Common myeloid progenitor, CD34-positive (primary cell): ENCODE measurements at regions of chr9 and their contacts with region 1.

Region 1: DNA sequence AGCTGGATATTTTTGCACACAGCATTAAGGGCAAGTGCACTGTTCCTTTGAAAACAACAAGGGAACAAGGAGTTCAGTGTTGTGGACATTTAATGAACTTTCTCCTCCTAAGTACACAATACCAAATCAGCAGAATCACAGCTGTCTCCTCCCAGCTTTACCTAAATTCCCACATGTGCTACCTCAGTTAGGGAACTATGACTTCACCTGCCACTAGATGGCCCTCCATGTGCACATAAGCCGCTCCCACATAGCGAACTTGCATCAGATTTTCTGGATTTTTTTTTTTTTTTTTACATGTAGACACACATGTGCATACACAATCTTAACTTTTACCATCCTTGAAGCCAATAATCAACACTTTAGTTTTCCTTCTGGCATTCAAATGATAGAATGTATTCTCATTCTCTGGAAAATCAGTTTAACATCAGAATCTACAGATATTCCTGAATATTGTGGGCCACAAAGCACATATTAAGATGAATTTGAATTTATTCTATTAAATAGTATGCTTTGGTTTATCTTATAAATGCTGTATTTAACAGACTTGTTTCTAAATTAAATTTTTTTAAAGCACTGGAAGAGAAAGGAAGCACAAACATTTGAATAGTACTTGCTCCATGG is 123.6 kb downstream of the PALM2AKAP2 start:
- DNase-seq: peak; percentile 69 to 78 (median 76)
- H3K4me3 ChIP-seq: no peak overlapping the region
- H3K27ac ChIP-seq: no peak overlapping the region
- H3K4me1 ChIP-seq: no peaks in the 10 kb centered on the region
- H3K27me3 ChIP-seq: peaks cover 0 to under 1% (median 0%) of the 10 kb centered on the region in 5 experiments

Region 2: DNA sequence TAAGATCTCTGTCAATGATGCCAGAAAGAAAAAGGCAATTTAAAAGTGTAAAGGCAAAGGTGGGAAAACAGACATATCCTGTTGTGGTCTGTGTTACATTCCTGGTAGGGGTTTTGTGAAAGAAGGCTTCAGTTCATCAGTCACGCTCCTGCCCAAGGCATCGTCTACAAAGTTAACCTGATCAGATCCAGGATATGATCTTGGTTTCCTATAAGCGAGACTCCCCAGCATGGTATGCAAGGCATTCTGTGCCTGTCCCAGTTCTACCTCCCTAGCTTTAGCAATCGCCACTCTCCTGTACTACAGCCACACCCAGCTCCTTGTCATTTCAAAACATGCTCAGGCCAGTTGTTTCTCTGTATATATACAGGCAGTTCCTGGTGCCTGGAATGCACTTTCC is 347.6 kb before region 1 on chr9:
- CTCF ChIA-PET with region 1: no interaction called
- POLR2A ChIA-PET with region 1: no interaction called
- DNase-seq: no peak
- H3K4me3 ChIP-seq: no peak overlapping the region
- H3K27ac ChIP-seq: no peak overlapping the region
- H3K4me1 ChIP-seq: no peaks in the 10 kb centered on the region
- H3K27me3 ChIP-seq: peaks cover 0 to 61% (median 23%) of the 10 kb centered on the region in 5 experiments

Region 3: DNA sequence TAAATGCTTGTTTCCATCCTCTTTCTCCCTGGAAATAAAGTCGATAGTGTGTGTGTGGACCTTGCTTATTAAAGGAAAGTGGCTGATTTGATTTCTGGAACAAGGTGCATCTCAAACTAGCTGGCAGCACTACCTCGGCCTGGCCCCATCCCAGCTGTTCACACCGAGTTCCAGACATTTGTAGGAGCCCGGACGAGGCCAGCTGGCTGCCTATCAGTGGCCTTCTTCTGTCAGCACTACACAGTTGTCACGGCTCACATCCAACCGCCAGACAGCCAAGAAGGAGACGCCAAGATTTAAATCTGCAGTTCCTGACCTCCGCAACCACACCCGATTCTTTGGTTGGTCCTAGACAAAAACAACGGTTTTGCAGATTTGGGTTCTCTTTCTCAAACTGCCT is 60.0 kb before region 1 on chr9:
- CTCF ChIA-PET with region 1: no interaction called
- POLR2A ChIA-PET with region 1: no interaction called
- DNase-seq: no peak
- H3K4me3 ChIP-seq: no peak overlapping the region
- H3K27ac ChIP-seq: no peak overlapping the region
- H3K4me1 ChIP-seq: no peaks in the 10 kb centered on the region
- H3K27me3 ChIP-seq: peaks cover 0 to 3% (median 0%) of the 10 kb centered on the region in 5 experiments

Region 4: DNA sequence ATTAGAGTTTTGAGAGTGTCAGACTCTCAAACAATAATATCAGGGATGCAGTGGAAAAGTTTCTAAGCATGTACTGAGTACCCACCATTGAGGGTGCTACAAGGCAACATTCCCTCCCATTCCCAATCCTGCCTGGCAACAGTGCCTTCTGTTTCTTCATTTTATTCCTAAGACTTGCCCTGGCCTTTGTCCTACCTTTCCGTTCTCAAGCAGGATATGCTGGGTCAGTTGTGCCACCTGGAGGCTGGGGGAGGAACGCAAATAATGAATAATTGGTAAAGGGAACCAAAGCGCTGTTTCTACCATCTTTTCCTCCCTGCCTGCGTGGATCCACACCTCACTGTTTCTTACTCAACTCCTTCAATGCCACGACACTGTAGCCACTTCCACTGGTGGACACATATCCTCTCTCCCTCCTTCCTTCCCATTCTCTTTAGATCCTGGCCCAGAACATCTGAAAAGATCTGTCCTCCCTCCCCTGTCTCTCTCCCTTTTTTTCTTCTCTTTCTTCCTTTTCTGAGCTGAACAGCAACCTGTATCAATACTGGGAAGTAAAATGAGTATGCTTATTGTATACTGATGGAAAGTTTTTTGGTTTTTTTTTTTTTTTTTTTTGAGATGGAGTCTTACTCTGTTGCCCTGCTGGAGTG is 154.8 kb after region 1 on chr9:
- CTCF ChIA-PET with region 1: interaction called, 15 read pairs
- POLR2A ChIA-PET with region 1: no interaction called
- DNase-seq: peak in 2 of 3 donors; percentile 46 to 56
- H3K4me3 ChIP-seq: no peak overlapping the region
- H3K27ac ChIP-seq: no peak overlapping the region
- H3K4me1 ChIP-seq: peaks cover 0 to 2% (median 0%) of the 10 kb centered on the region in 4 experiments
- H3K27me3 ChIP-seq: no peaks in the 10 kb centered on the region

Region 5: DNA sequence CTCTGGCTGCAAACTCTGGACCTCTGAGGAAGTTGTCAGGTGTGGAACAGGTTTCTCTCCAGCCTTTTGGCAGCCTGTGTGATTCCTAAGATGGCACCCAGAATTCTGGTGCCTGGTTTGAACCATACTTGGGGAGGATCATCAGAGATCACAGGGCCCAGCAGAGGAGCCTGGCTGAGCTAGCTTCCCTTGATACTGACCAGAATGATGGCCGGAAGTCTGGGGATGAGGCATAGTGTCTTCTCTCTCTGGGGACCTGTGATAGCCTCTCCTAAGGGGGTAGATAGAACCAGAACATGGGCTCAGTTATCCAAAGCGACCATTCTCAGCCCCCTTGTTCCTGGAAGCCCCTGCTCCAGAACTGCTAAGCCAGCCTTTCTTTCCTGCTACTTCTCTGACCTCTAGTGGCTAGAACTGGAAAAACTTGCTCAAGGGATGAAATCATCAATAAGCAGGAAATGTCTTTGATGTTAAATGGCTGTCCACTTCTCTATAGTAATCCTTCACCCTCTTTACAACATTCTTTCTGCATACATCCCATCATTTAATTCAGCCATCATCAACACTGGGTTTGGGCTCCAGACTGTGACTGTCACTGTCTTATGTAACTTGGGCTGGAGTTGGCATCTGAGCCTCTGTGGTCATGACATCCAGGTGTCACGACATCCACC is 249.2 kb after region 1 on chr9:
- CTCF ChIA-PET with region 1: interaction called, 94 read pairs
- POLR2A ChIA-PET with region 1: no interaction called
- DNase-seq: peak; percentile 68 to 79 (median 71)
- H3K4me3 ChIP-seq: no peak overlapping the region
- H3K27ac ChIP-seq: no peak overlapping the region
- H3K4me1 ChIP-seq: peaks cover 45 to 67% (median 55%) of the 10 kb centered on the region in 4 experiments
- H3K27me3 ChIP-seq: no peaks in the 10 kb centered on the region

Region 6: DNA sequence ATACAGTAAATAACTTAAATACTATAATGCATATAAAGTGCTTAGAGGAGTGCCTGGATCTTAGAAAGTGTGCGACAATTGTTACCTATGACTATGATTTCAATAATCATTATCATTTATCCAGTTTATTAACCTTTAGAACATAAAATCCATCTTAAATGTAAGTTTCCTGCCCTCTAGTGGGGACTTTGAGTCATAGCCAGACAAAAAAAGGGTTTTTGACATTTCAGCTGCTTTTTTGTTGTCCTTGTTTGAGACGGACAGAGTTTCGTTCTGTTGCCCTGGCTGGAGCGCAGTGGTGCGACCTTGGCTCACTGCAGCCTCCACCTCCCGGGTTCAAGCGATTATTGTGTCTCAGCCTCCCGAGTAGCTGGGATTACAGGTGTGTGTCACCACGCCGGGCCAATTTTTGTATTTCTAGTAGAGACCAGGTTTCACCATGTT is 314.1 kb after region 1 on chr9:
- CTCF ChIA-PET with region 1: interaction called, 10 read pairs
- POLR2A ChIA-PET with region 1: no interaction called
- DNase-seq: peak; percentile 61 to 72 (median 65)
- H3K4me3 ChIP-seq: peak overlapping the region in 1 of 7 experiments; percentile 13
- H3K27ac ChIP-seq: no peak overlapping the region
- H3K4me1 ChIP-seq: peaks cover 0 to 7% (median 4%) of the 10 kb centered on the region in 4 experiments
- H3K27me3 ChIP-seq: no peaks in the 10 kb centered on the region